Activated CD8-positive, alpha-beta T cell treated with anti-CD3 and anti-CD28 coated beads for 36 hours (primary cell): ENCODE measurements at regions of chr9 and their contacts with region 1.

Region 1: GRCh38 chr9:125631391-125632085 is 75.5 kb downstream of the MAPKAP1 start:
- DNase-seq: peak; percentile 48
- ATAC-seq: peak; percentile 50
- H3K4me3 Mint-ChIP-seq: no peak overlapping the region
- H3K27ac Mint-ChIP-seq: peak overlapping the region; percentile 74
- H3K4me1 Mint-ChIP-seq: peaks cover 80% of the 10 kb centered on the region
- H3K27me3 Mint-ChIP-seq: no peaks in the 10 kb centered on the region
- CTCF ChIP-seq: peak; percentile 80

Region 2: DNA sequence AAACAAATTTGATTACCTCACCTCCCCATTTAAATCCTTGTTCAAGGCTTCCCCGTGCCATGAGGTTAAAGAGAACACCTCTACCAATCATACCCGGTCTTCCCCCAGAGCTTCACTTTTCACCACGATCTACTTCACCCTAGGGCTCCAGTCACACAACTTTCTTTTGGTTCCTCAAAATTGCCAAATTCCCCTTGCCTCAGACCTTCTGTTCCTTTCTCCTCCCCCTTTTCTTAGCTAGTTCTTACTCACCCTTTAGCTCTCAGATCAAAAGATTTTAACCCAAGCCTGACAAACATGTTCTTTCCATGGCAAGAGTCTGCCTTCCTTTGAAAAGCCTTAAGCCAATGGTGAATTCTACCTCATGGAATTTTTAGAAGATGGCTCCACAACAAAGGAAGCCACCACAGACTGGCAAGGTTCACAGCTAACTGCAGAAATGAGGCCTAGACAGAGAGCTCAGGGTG is 18.8 kb after region 1 on chr9:
- CTCF ChIA-PET with region 1: interaction called, 18 read pairs
- POLR2A ChIA-PET with region 1: interaction called, 8 read pairs
- intact Hi-C with region 1: loop called (anchors 2 kb)
- DNase-seq: peak; percentile 44
- ATAC-seq: peak; percentile 82
- H3K4me3 Mint-ChIP-seq: peak overlapping the region; percentile 36
- H3K27ac Mint-ChIP-seq: peak overlapping the region; percentile 86
- H3K4me1 Mint-ChIP-seq: peaks cover 75% of the 10 kb centered on the region
- H3K27me3 Mint-ChIP-seq: no peaks in the 10 kb centered on the region
- CTCF ChIP-seq: no peak

Region 3: DNA sequence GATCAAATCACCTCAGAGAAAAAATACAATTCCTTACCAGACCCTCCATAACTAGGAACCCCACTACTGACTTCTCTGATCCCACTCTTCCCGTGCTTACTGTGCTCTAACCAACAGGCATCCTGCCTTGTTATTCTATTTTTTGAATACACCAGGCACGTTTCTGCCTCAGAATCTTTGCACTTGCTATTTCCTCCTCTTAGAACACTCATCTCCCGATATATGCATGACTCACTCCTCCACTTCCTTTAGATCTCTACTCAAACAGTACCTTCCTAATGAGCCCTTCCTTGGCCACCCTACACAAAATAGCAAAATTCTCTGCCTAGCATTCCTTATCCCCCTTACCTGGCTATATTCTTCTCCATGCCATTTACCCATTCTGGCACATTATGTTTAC is 31.6 kb after region 1 on chr9:
- CTCF ChIA-PET with region 1: no interaction called
- POLR2A ChIA-PET with region 1: no interaction called
- intact Hi-C with region 1: no loop called
- DNase-seq: peak; percentile 5
- ATAC-seq: peak; percentile 85
- H3K4me3 Mint-ChIP-seq: no peak overlapping the region
- H3K27ac Mint-ChIP-seq: peak overlapping the region; percentile 91
- H3K4me1 Mint-ChIP-seq: peaks cover 14% of the 10 kb centered on the region
- H3K27me3 Mint-ChIP-seq: no peaks in the 10 kb centered on the region
- CTCF ChIP-seq: no peak

Region 4: DNA sequence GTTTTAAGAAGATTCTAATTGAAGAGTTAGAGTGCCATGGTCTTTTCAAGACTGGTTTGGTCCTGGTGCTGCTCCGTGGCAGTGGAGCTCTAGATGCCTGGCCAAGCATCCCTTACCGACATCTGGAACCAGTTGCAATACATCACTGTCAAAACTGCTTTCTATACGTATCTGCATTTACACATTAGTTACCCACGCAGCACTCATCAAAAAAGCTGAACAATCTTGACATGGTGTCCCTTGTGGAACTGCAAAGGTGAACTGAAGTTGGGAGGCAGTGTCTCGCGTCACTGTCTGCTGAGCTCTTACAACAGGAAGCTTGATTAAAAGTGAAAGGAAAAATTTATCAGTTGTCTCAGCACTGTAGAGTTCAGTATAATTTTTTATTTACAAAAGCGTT is 198.2 kb after region 1 on chr9:
- CTCF ChIA-PET with region 1: no interaction called
- POLR2A ChIA-PET with region 1: no interaction called
- intact Hi-C with region 1: loop called (anchors 10 kb)
- DNase-seq: peak; percentile 74
- ATAC-seq: peak; percentile 92
- H3K4me3 Mint-ChIP-seq: peak overlapping the region; percentile 78
- H3K27ac Mint-ChIP-seq: peak overlapping the region; percentile 85
- H3K4me1 Mint-ChIP-seq: peaks cover 36% of the 10 kb centered on the region
- H3K27me3 Mint-ChIP-seq: no peaks in the 10 kb centered on the region
- CTCF ChIP-seq: no peak